Activated CD8-positive, alpha-beta T cell treated with anti-CD3 and anti-CD28 coated beads, Interleukin-2, amount 10 ng/mL, durations not matched to agents 7 days and 5 days (primary cell): ENCODE measurements at regions of chr5 and their contacts with region 1.

Region 1: DNA sequence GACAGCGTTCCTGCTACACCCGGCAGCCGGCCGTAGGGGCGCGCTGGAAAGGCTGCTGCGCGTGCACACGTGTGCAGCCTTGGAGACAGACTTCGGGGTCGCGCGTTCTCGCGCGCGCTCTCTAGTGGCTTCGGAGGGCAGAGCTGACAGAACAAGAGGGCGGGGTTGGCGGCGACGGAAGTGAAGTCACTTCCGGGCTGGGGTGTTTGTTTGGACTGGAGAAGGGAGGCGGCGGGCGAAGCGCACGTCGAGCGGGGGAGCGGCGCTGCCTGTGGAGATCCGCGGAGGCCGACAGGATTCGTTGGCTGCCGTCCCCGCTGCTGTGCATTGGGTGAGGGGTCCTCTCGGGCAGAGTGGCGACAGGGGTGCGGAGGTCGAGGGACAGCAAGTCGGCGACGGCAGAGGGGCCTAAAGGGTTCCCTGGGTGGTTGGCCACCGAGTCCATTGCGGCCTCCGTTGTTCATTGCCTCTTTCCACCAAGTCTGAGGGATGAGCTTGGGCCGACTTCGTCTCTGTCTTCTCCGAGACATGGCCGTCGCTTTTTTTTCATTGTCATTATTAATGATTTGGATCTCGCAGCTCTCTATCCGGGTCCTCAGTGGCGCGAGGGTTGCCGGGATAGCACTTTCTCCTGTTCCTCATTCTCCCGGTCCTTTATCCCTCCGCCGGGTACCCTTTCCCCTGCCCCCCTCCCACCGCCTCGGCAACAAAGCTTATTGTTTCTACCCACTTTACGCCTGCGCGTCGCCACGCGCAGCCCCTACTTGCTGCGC is at the start of gene PAIP2:
- DNase-seq: peak; percentile 98
- ATAC-seq: peak; percentile 87
- H3K4me3 Mint-ChIP-seq: peak within 1 kb of the TSS; percentile 93
- H3K27ac Mint-ChIP-seq: peak within 1 kb of the TSS; percentile 98
- H3K4me1 Mint-ChIP-seq: peaks cover 43% of the 10 kb centered on the region
- H3K27me3 Mint-ChIP-seq: no peaks in the 10 kb centered on the region
- total RNA-seq, gene PAIP2: 90.7 to 93.5 TPM

Region 2: DNA sequence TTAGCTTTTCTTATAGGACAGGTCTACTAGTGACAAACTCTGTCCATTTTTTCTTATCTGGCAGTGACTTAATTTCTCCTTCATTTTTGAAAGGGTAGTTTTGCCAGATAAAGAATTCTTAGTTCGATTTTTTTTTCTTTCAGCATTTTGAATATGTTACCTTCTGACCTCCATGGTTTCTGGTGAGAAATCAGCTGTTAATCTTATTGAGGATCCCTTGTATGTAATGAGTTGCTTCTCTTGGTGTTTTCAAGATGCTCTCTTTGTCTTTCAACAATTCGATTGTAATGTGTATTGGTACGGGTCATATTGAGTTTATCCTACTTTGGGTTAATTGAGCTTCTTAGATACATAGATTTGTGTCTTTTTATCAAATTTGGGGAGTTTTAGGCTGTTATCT is 12.3 kb after region 1 on chr5:
- CTCF ChIA-PET with region 1: interaction called, 10 read pairs
- POLR2A ChIA-PET with region 1: interaction called, 4 read pairs
- DNase-seq: no peak
- ATAC-seq: no peak
- H3K4me3 Mint-ChIP-seq: no peak overlapping the region
- H3K27ac Mint-ChIP-seq: no peak overlapping the region
- H3K4me1 Mint-ChIP-seq: peaks cover 5% of the 10 kb centered on the region
- H3K27me3 Mint-ChIP-seq: no peaks in the 10 kb centered on the region

Region 3: DNA sequence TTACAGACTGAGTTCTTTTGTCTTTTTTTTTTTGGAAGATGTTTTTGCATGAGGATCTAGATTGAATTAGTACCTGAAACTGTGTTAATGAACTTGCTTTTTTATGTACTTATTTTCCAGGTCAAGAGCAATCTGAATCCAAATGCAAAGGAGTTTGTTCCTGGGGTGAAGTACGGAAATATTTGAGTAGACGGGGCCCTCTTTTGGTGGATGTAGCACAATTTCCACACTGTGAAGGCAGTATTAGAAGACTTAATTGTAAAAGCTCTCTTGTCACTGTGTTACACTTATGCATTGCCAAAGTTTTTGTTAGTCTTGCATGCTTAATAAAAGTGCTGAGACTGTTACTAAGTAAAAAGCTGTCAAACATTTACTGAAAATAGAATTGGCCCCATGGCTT is 26.8 kb after region 1 on chr5:
- CTCF ChIA-PET with region 1: interaction called, 12 read pairs
- POLR2A ChIA-PET with region 1: interaction called, 5 read pairs
- DNase-seq: no peak
- ATAC-seq: no peak
- H3K4me3 Mint-ChIP-seq: no peak overlapping the region
- H3K27ac Mint-ChIP-seq: no peak overlapping the region
- H3K4me1 Mint-ChIP-seq: peaks cover 24% of the 10 kb centered on the region
- H3K27me3 Mint-ChIP-seq: no peaks in the 10 kb centered on the region

Region 4: DNA sequence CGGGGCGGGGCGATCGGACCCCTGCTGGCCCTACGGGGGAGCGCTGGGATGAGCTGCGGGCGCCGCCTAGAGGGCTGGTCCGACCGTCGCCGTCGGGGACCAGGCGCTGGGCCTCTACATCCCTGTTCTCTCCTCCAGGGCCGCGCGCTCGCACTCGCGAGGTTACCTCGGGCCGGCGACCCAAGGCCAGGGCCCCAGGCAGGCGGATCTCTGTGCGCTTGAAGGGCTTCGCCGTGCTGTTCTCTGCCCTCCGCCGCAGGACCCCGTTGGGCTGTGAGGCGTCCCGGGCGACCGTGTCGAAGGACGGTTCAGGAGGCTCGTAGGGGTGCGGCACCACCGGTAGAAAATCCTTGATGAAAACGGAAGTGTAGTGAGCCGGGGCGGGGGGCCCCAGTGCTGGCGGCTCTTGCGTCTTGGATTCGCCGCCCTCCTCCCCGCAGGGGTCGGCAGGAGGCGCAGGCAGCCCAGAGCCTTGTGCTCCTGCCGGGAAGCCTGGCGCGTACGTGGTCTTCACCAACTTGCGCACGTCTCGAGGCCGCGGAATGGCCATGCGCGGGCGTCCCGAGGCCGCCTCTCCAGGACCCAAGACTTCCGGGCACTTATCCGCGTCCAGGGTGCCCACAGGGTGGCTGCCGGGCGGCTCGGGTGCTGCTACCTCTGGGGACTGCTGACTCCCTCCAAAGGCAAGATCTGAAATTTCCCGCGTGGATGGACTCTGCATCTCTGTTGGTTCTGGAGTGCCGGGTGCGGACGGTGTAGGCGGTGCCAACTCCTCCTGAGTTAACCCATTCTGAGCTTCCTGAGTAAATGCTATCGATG is 51.1 kb after region 1 on chr5:
- CTCF ChIA-PET with region 1: interaction called, 32 read pairs
- POLR2A ChIA-PET with region 1: interaction called, 139 read pairs
- DNase-seq: peak; percentile 93
- ATAC-seq: peak; percentile 73
- H3K4me3 Mint-ChIP-seq: peak overlapping the region; percentile 98
- H3K27ac Mint-ChIP-seq: peak overlapping the region; percentile 97
- H3K4me1 Mint-ChIP-seq: peaks cover 68% of the 10 kb centered on the region
- H3K27me3 Mint-ChIP-seq: no peaks in the 10 kb centered on the region

Region 5: GRCh38 chr5:139403787-139404483 is 62.1 kb after region 1 on chr5 and contains the start of gene SPATA24:
- CTCF ChIA-PET with region 1: interaction called, 12 read pairs
- POLR2A ChIA-PET with region 1: interaction called, 5 read pairs
- DNase-seq: peak; percentile 99
- ATAC-seq: peak; percentile 93
- H3K4me3 Mint-ChIP-seq: peak within 1 kb of the TSS; percentile 94
- H3K27ac Mint-ChIP-seq: peak within 1 kb of the TSS; percentile 100
- H3K4me1 Mint-ChIP-seq: peaks cover 40% of the 10 kb centered on the region
- H3K27me3 Mint-ChIP-seq: no peaks in the 10 kb centered on the region
- total RNA-seq, gene SPATA24: 3.8 to 4.0 TPM

Region 6: DNA sequence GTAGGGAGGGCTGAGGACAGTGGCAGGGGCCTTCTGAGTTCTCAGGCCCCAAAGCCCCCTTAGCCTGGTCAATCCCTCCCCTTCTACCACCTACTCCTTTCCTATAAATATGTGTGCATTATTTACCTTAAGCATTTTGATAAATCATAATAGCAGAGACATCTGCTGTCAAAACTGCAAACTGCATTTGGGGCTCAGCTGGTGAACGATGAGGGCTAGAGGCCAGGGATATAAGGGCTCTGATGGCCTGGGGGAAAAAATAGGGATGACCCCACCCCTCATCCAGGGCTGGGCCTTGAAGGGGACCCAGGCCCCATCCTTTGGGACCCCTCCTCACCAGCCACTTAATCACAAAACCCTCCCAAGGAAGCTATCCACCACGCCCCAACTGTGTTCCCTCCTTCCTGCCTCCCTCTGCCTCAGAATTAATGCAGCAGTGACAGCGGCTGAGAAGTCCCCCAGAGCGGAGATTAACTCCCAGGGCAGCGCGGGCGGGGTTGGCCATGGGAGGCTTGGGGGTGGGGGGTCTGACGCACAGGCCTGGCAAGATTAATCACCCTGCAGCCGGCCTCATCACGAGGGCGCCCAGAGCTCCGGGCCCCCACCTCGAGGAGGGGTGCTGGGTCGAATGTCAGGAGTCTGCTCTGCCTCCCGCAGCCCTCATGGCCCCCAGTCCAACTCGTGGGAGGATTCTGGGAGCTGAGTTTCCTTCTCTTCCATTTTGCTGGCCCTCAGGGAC is 348.4 kb after region 1 on chr5:
- CTCF ChIA-PET with region 1: no interaction called
- POLR2A ChIA-PET with region 1: no interaction called
- DNase-seq: peak; percentile 48
- ATAC-seq: no peak
- H3K4me3 Mint-ChIP-seq: no peak overlapping the region
- H3K27ac Mint-ChIP-seq: no peak overlapping the region
- H3K4me1 Mint-ChIP-seq: peaks cover 6% of the 10 kb centered on the region
- H3K27me3 Mint-ChIP-seq: no peaks in the 10 kb centered on the region